K562 (cell line): ENCODE measurements at regions of chr1 and their contacts with region 1.

Region 1: GRCh38 chr1:243763806-243764205 is 86.2 kb downstream of the AKT3 start:
- DNase-seq: no peak
- ATAC-seq: no peak
- H3K4me3 ChIP-seq: no peak overlapping the region
- H3K27ac ChIP-seq: no peak overlapping the region
- H3K4me1 ChIP-seq: no peaks in the 10 kb centered on the region
- H3K27me3 ChIP-seq: no peaks in the 10 kb centered on the region
- CTCF ChIP-seq: no peak
- EP300 ChIP-seq: no peak
- POLR2A ChIP-seq: no peak
- RAD21 ChIP-seq: no peak

Region 2: GRCh38 chr1:243693800-243694199 is 70.0 kb before region 1 on chr1:
- CTCF ChIA-PET with region 1: no interaction called
- POLR2A ChIA-PET with region 1: no interaction called
- in situ Hi-C with region 1: no loop called
- intact Hi-C with region 1: no loop called
- DNase-seq: no peak
- ATAC-seq: no peak
- H3K4me3 ChIP-seq: no peak overlapping the region
- H3K27ac ChIP-seq: no peak overlapping the region
- H3K4me1 ChIP-seq: no peaks in the 10 kb centered on the region
- H3K27me3 ChIP-seq: no peaks in the 10 kb centered on the region
- CTCF ChIP-seq: no peak
- EP300 ChIP-seq: no peak
- POLR2A ChIP-seq: no peak
- RAD21 ChIP-seq: no peak

Region 3: DNA sequence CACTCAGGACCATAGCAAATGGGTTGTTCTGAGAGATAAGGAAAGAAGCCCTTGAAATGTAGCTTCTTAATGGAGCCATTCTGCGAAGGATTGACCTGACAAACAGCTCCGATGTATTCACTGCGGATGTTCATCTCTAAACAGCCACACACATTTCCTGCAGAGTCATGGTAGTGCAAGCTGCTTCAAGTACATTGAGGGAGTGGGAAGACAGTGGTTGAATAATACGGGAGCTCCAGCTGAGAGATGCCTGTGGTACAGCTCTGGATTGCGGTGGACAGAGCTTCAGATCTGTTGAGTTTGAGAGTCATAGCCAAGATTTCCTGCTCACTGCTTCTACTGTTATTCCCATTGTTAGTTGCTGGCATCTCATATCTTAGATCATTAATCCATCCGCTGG is 373.9 kb after region 1 on chr1:
- CTCF ChIA-PET with region 1: no interaction called
- POLR2A ChIA-PET with region 1: no interaction called
- in situ Hi-C with region 1: no loop called
- intact Hi-C with region 1: loop called (anchors 10 kb)
- DNase-seq: peak in 1 of 4 experiments; percentile 21
- ATAC-seq: peak; percentile 77
- H3K4me3 ChIP-seq: no peak overlapping the region
- H3K27ac ChIP-seq: no peak overlapping the region
- H3K4me1 ChIP-seq: no peaks in the 10 kb centered on the region
- H3K27me3 ChIP-seq: peaks cover 13 to 21% of the 10 kb centered on the region in 2 experiments
- CTCF ChIP-seq: no peak
- EP300 ChIP-seq: no peak
- POLR2A ChIP-seq: no peak
- RAD21 ChIP-seq: no peak